ENCODE measurements at regions of chr9 and their contacts with region 1.

Region 1: GRCh38 chr9:113578882-113579282 is 115.4 kb downstream of the RGS3 start:
- DNase-seq: peak; percentile 58 to 93 (median 77)
- ATAC-seq: peak; percentile 59
- H3K4me3 ChIP-seq: peak overlapping the region; percentile 25
- H3K4me3 Mint-ChIP-seq: peak overlapping the region; percentile 85
- H3K27ac ChIP-seq: peak overlapping the region; percentile 72 to 77
- H3K27ac Mint-ChIP-seq: peak overlapping the region; percentile 94
- H3K4me1 ChIP-seq: peaks cover 74% of the 10 kb centered on the region
- H3K4me1 Mint-ChIP-seq: peaks cover 78% of the 10 kb centered on the region
- H3K27me3 ChIP-seq: no peaks in the 10 kb centered on the region
- H3K27me3 Mint-ChIP-seq: no peaks in the 10 kb centered on the region
- CTCF ChIP-seq: no peak

Region 2: DNA sequence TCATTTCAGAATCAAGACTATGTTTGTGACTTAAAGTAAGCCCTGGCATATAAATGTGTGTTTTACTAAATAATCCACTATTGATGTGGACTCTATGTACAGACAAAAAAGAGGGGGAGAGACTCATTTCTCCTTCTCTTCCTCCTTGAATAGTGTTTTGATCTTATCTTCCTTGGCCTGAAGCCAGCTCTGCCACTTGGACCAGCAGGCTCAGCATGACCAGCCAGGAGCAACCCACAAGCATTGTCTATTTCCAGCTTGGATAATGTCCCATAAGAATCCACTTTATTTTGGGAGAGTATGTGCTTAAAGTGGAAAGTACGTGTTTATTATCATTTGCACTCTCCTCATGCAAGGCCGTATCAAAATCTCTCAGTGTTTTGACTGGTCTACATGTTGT is 664.4 kb before region 1 on chr9:
- CTCF ChIA-PET with region 1: no interaction called
- POLR2A ChIA-PET with region 1: no interaction called
- intact Hi-C with region 1: no loop called
- DNase-seq: no peak
- ATAC-seq: no peak
- H3K4me3 ChIP-seq: no peak overlapping the region
- H3K4me3 Mint-ChIP-seq: no peak overlapping the region
- H3K27ac ChIP-seq: no peak overlapping the region
- H3K27ac Mint-ChIP-seq: no peak overlapping the region
- H3K4me1 ChIP-seq: no peaks in the 10 kb centered on the region
- H3K4me1 Mint-ChIP-seq: no peaks in the 10 kb centered on the region
- H3K27me3 ChIP-seq: no peaks in the 10 kb centered on the region
- H3K27me3 Mint-ChIP-seq: peaks cover 18% of the 10 kb centered on the region
- CTCF ChIP-seq: no peak

Region 3: GRCh38 chr9:113401027-113401792 is 177.7 kb before region 1 on chr9 and contains the start of gene ALAD:
- CTCF ChIA-PET with region 1: interaction called, 7 read pairs
- POLR2A ChIA-PET with region 1: no interaction called
- intact Hi-C with region 1: loop called (anchors 2 to 5 kb)
- DNase-seq: peak; percentile 98 to 100 (median 99)
- ATAC-seq: peak; percentile 98
- H3K4me3 ChIP-seq: peak within 1 kb of the TSS; percentile 98
- H3K4me3 Mint-ChIP-seq: peak within 1 kb of the TSS; percentile 98
- H3K27ac ChIP-seq: peak within 1 kb of the TSS; percentile 50 to 54
- H3K27ac Mint-ChIP-seq: peak within 1 kb of the TSS; percentile 86
- H3K4me1 ChIP-seq: peaks cover 33% of the 10 kb centered on the region
- H3K4me1 Mint-ChIP-seq: peaks cover 34% of the 10 kb centered on the region
- H3K27me3 ChIP-seq: no peaks in the 10 kb centered on the region
- H3K27me3 Mint-ChIP-seq: no peaks in the 10 kb centered on the region
- CTCF ChIP-seq: peak; percentile 93
- total RNA-seq, gene ALAD: 14.5 to 15.0 TPM

Region 4: DNA sequence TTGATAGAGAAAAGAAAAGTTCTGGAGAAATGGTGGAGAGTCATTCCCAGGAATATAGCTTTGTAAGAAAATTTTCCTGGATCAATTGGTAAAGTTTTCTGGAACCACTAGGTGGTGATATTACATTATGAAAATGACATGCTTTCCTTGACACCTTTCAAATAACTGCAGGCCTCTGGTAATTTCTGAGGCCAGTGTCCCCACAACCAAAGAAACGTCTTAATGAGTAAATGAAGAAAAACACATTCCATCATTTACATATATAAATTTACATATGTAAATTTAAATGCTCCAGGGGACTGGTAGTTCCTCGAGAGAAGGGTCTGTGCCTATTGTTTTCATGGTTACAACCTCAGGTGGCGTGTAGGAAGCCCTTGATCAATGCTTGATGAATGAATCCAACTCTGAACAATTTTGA is 132.6 kb before region 1 on chr9:
- CTCF ChIA-PET with region 1: interaction called, 7 read pairs
- POLR2A ChIA-PET with region 1: interaction called, 4 read pairs
- intact Hi-C with region 1: loop called in 1 of 2 experiments (anchors 2 kb)
- DNase-seq: peak in 4 of 14 experiments; percentile 19 to 63 (median 55)
- ATAC-seq: no peak
- H3K4me3 ChIP-seq: no peak overlapping the region
- H3K4me3 Mint-ChIP-seq: no peak overlapping the region
- H3K27ac ChIP-seq: no peak overlapping the region
- H3K27ac Mint-ChIP-seq: no peak overlapping the region
- H3K4me1 ChIP-seq: no peaks in the 10 kb centered on the region
- H3K4me1 Mint-ChIP-seq: no peaks in the 10 kb centered on the region
- H3K27me3 ChIP-seq: no peaks in the 10 kb centered on the region
- H3K27me3 Mint-ChIP-seq: no peaks in the 10 kb centered on the region
- CTCF ChIP-seq: peak; percentile 95

Region 5: GRCh38 chr9:113523421-113524236 is 55.3 kb before region 1 on chr9:
- CTCF ChIA-PET with region 1: interaction called, 3 read pairs
- POLR2A ChIA-PET with region 1: interaction called, 43 read pairs
- intact Hi-C with region 1: loop called (anchors 2 to 5 kb)
- DNase-seq: peak in 11 of 14 experiments; percentile 11 to 82 (median 47)
- ATAC-seq: peak; percentile 50
- H3K4me3 ChIP-seq: peak overlapping the region; percentile 27
- H3K4me3 Mint-ChIP-seq: peak overlapping the region; percentile 70
- H3K27ac ChIP-seq: peak overlapping the region; percentile 30 to 59
- H3K27ac Mint-ChIP-seq: peak overlapping the region; percentile 78
- H3K4me1 ChIP-seq: peaks cover 72% of the 10 kb centered on the region
- H3K4me1 Mint-ChIP-seq: peaks cover 78% of the 10 kb centered on the region
- H3K27me3 ChIP-seq: no peaks in the 10 kb centered on the region
- H3K27me3 Mint-ChIP-seq: no peaks in the 10 kb centered on the region
- CTCF ChIP-seq: no peak

Region 6: DNA sequence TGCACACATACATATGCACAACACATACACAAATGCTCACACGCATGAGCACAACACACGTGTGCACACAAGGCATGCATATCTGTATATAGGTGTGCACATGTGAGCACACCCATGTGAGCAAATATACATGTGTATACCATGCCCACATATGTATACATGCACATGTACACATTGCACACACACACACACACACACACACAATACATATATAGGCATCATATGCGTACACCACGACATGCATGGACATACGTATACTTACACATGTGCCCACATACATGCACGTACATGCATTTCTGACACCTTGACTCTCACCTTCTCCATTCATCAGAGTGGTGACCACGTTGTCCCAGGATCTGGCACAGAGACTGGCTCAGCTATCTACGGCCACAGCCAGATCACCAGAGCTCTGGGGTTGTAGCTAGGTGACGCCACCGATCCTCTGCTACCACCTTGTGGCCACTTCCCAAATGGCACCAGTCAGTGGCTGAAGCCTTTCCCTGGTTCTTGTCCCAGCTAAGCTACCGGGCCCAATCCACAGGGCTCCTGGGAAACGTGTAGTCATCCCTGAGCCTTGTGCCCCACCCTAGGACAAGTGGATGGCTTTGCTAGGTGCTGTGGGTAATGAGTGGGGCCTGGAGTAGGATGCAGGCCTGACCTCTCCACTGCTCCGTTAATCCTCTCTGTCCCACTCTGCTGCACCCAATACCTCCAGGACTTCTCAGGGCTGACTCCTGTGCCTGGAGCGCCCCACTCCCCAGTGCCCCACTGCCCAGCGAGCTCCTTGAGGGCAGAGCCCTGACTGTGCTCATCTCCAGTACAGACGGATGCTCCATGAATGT is 79.0 kb after region 1 on chr9:
- CTCF ChIA-PET with region 1: interaction called, 3 read pairs
- POLR2A ChIA-PET with region 1: no interaction called
- intact Hi-C with region 1: loop called in 1 of 2 experiments (anchors 5 kb)
- DNase-seq: peak; percentile 60 to 87 (median 74)
- ATAC-seq: peak; percentile 92
- H3K4me3 ChIP-seq: no peak overlapping the region
- H3K4me3 Mint-ChIP-seq: no peak overlapping the region
- H3K27ac ChIP-seq: no peak overlapping the region
- H3K27ac Mint-ChIP-seq: no peak overlapping the region
- H3K4me1 ChIP-seq: peaks cover 10% of the 10 kb centered on the region
- H3K4me1 Mint-ChIP-seq: peaks cover 4% of the 10 kb centered on the region
- H3K27me3 ChIP-seq: no peaks in the 10 kb centered on the region
- H3K27me3 Mint-ChIP-seq: peaks cover 15% of the 10 kb centered on the region
- CTCF ChIP-seq: peak; percentile 88

Measured in CD4-positive, alpha-beta T cell (primary cell).